CD8-positive, alpha-beta T cell (primary cell): ENCODE measurements at regions of chr4 and their contacts with region 1.

Region 1: DNA sequence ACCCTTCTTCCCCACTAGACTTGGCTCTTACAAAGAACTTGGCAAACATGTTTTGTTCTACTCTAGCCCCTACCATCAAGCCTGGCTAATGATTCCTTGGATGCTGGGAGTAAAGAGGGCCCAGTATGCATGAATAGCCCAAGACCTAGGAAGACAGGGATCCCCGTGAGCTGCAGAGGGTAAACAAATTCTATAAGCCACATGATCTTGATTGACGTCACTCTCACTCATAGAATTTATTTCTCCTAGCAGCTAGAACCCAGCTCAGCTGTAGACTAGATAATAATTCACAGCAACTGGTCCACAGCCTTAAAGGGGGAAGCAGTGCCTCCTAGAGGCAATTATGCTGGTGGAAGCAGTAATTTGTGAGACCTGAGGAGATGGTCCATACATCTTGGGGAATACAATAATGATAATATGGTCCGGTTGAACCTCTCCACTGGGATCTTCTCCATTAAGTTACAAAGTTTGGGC is 16.1 kb upstream of the USO1 start:
- DNase-seq: peak in 8 of 9 experiments; percentile 9 to 82 (median 58)
- ATAC-seq: peak; percentile 96
- H3K4me3 ChIP-seq: no peak overlapping the region
- H3K4me3 Mint-ChIP-seq: no peak overlapping the region
- H3K27ac ChIP-seq: no peak overlapping the region
- H3K27ac Mint-ChIP-seq: peak overlapping the region; percentile 78
- H3K4me1 ChIP-seq: peaks cover 4% of the 10 kb centered on the region
- H3K4me1 Mint-ChIP-seq: peaks cover 8% of the 10 kb centered on the region
- H3K27me3 ChIP-seq: no peaks in the 10 kb centered on the region
- H3K27me3 Mint-ChIP-seq: no peaks in the 10 kb centered on the region
- CTCF ChIP-seq: peak; percentile 75

Region 2: DNA sequence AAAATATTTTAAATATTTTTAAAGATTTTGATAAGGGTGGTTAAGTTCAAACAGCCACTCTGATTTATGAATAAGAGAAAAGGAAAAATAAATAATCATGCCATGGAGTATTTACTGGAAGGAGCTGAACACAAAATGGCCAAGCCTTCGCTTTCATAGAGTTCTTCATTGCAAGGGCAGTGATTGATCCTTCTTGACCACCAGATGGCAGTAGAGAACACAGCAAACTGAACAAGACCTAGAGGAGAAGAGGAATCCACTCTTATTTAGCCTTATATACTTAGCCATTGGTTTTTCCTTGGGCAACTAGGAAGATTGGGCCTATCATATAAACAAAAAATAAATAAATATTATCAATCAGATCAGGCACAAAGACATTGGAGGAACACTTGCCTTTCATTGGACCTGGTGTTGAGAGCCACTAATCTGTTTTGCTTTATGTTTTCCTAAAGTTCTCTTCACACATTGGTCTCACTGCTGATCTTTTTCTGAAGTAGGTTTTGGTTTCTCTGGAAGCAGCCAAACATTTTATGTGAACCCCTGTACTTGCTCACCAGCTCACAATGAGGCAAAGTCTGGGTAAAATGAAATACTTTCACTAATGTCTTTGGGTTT is 833.4 kb before region 1 on chr4:
- CTCF ChIA-PET with region 1: no interaction called
- POLR2A ChIA-PET with region 1: no interaction called
- intact Hi-C with region 1: loop called in 1 of 2 experiments (anchors 10 kb)
- DNase-seq: peak in 4 of 9 experiments; percentile 5 to 68 (median 35)
- ATAC-seq: peak; percentile 61
- H3K4me3 ChIP-seq: no peak overlapping the region
- H3K4me3 Mint-ChIP-seq: no peak overlapping the region
- H3K27ac ChIP-seq: no peak overlapping the region
- H3K27ac Mint-ChIP-seq: no peak overlapping the region
- H3K4me1 ChIP-seq: no peaks in the 10 kb centered on the region
- H3K4me1 Mint-ChIP-seq: no peaks in the 10 kb centered on the region
- H3K27me3 ChIP-seq: no peaks in the 10 kb centered on the region
- H3K27me3 Mint-ChIP-seq: peaks cover 12% of the 10 kb centered on the region
- CTCF ChIP-seq: peak; percentile 76

Region 3: GRCh38 chr4:75644095-75644494 is 64.2 kb before region 1 on chr4:
- CTCF ChIA-PET with region 1: interaction called, 7 read pairs
- POLR2A ChIA-PET with region 1: no interaction called
- intact Hi-C with region 1: loop called in 1 of 2 experiments (anchors 2 kb)
- DNase-seq: no peak
- ATAC-seq: no peak
- H3K4me3 ChIP-seq: no peak overlapping the region
- H3K4me3 Mint-ChIP-seq: no peak overlapping the region
- H3K27ac ChIP-seq: no peak overlapping the region
- H3K27ac Mint-ChIP-seq: peak overlapping the region; percentile 65
- H3K4me1 ChIP-seq: no peaks in the 10 kb centered on the region
- H3K4me1 Mint-ChIP-seq: peaks cover 21% of the 10 kb centered on the region
- H3K27me3 ChIP-seq: no peaks in the 10 kb centered on the region
- H3K27me3 Mint-ChIP-seq: no peaks in the 10 kb centered on the region
- CTCF ChIP-seq: no peak

Region 4: GRCh38 chr4:75653845-75654503 is 54.3 kb before region 1 on chr4:
- CTCF ChIA-PET with region 1: interaction called, 15 read pairs
- POLR2A ChIA-PET with region 1: no interaction called
- intact Hi-C with region 1: loop called in 1 of 2 experiments (anchors 1 kb)
- DNase-seq: peak in 2 of 9 experiments; percentile 26 to 45
- ATAC-seq: peak; percentile 15
- H3K4me3 ChIP-seq: no peak overlapping the region
- H3K4me3 Mint-ChIP-seq: peak overlapping the region; percentile 29
- H3K27ac ChIP-seq: peak overlapping the region in 1 of 2 experiments; percentile 10
- H3K27ac Mint-ChIP-seq: peak overlapping the region; percentile 95
- H3K4me1 ChIP-seq: peaks cover 57% of the 10 kb centered on the region
- H3K4me1 Mint-ChIP-seq: peaks cover 68% of the 10 kb centered on the region
- H3K27me3 ChIP-seq: no peaks in the 10 kb centered on the region
- H3K27me3 Mint-ChIP-seq: no peaks in the 10 kb centered on the region
- CTCF ChIP-seq: no peak

Region 5: GRCh38 chr4:76305971-76306881 is 598.0 kb after region 1 on chr4 and contains the start of gene STBD1:
- CTCF ChIA-PET with region 1: no interaction called
- POLR2A ChIA-PET with region 1: no interaction called
- intact Hi-C with region 1: no loop called
- DNase-seq: peak in 5 of 9 experiments; percentile 24 to 60 (median 46)
- ATAC-seq: peak; percentile 46
- H3K4me3 ChIP-seq: peak within 1 kb of the TSS; percentile 61 to 87
- H3K4me3 Mint-ChIP-seq: peak within 1 kb of the TSS; percentile 78
- H3K27ac ChIP-seq: peak within 1 kb of the TSS in 1 of 2 experiments; percentile 29
- H3K27ac Mint-ChIP-seq: peak within 1 kb of the TSS; percentile 12
- H3K4me1 ChIP-seq: peaks cover 24% of the 10 kb centered on the region
- H3K4me1 Mint-ChIP-seq: peaks cover 24% of the 10 kb centered on the region
- H3K27me3 ChIP-seq: no peaks in the 10 kb centered on the region
- H3K27me3 Mint-ChIP-seq: peaks cover 4% of the 10 kb centered on the region
- CTCF ChIP-seq: no peak
- total RNA-seq, gene STBD1: not detected